CD8-positive, alpha-beta T cell (primary cell): ENCODE measurements at regions of chr17 and their contacts with region 1.

Region 1: GRCh38 chr17:43766413-43767052 is 7.9 kb upstream of the SOST start:
- DNase-seq: peak in 7 of 9 experiments; percentile 22 to 68 (median 51)
- ATAC-seq: no peak
- H3K4me3 ChIP-seq: no peak overlapping the region
- H3K4me3 Mint-ChIP-seq: no peak overlapping the region
- H3K27ac ChIP-seq: no peak overlapping the region
- H3K27ac Mint-ChIP-seq: no peak overlapping the region
- H3K4me1 ChIP-seq: no peaks in the 10 kb centered on the region
- H3K4me1 Mint-ChIP-seq: no peaks in the 10 kb centered on the region
- H3K27me3 ChIP-seq: no peaks in the 10 kb centered on the region
- H3K27me3 Mint-ChIP-seq: no peaks in the 10 kb centered on the region
- CTCF ChIP-seq: peak; percentile 94

Region 2: GRCh38 chr17:43576563-43577229 is 189.8 kb before region 1 on chr17:
- CTCF ChIA-PET with region 1: interaction called, 14 read pairs
- POLR2A ChIA-PET with region 1: no interaction called
- intact Hi-C with region 1: loop called in 1 of 2 experiments (anchors 2 kb)
- DNase-seq: peak; percentile 37 to 83 (median 59)
- ATAC-seq: peak; percentile 71
- H3K4me3 ChIP-seq: no peak overlapping the region
- H3K4me3 Mint-ChIP-seq: no peak overlapping the region
- H3K27ac ChIP-seq: no peak overlapping the region
- H3K27ac Mint-ChIP-seq: no peak overlapping the region
- H3K4me1 ChIP-seq: peaks cover 14% of the 10 kb centered on the region
- H3K4me1 Mint-ChIP-seq: peaks cover 14% of the 10 kb centered on the region
- H3K27me3 ChIP-seq: no peaks in the 10 kb centered on the region
- H3K27me3 Mint-ChIP-seq: peaks cover 2% of the 10 kb centered on the region
- CTCF ChIP-seq: peak; percentile 98

Region 3: GRCh38 chr17:43701318-43701743 is 65.2 kb before region 1 on chr17:
- CTCF ChIA-PET with region 1: interaction called, 23 read pairs
- POLR2A ChIA-PET with region 1: no interaction called
- intact Hi-C with region 1: no loop called
- DNase-seq: peak in 8 of 9 experiments; percentile 13 to 81 (median 52)
- ATAC-seq: peak; percentile 77
- H3K4me3 ChIP-seq: peak overlapping the region in 1 of 2 experiments; percentile 2
- H3K4me3 Mint-ChIP-seq: no peak overlapping the region
- H3K27ac ChIP-seq: no peak overlapping the region
- H3K27ac Mint-ChIP-seq: no peak overlapping the region
- H3K4me1 ChIP-seq: peaks cover 6% of the 10 kb centered on the region
- H3K4me1 Mint-ChIP-seq: peaks cover 13% of the 10 kb centered on the region
- H3K27me3 ChIP-seq: no peaks in the 10 kb centered on the region
- H3K27me3 Mint-ChIP-seq: peaks cover 21% of the 10 kb centered on the region
- CTCF ChIP-seq: no peak

Region 4: GRCh38 chr17:43740541-43740940 is 26.0 kb before region 1 on chr17:
- CTCF ChIA-PET with region 1: interaction called, 17 read pairs
- POLR2A ChIA-PET with region 1: no interaction called
- intact Hi-C with region 1: no loop called
- DNase-seq: no peak
- ATAC-seq: no peak
- H3K4me3 ChIP-seq: no peak overlapping the region
- H3K4me3 Mint-ChIP-seq: no peak overlapping the region
- H3K27ac ChIP-seq: no peak overlapping the region
- H3K27ac Mint-ChIP-seq: no peak overlapping the region
- H3K4me1 ChIP-seq: no peaks in the 10 kb centered on the region
- H3K4me1 Mint-ChIP-seq: no peaks in the 10 kb centered on the region
- H3K27me3 ChIP-seq: no peaks in the 10 kb centered on the region
- H3K27me3 Mint-ChIP-seq: peaks cover 41% of the 10 kb centered on the region
- CTCF ChIP-seq: no peak

Region 5: DNA sequence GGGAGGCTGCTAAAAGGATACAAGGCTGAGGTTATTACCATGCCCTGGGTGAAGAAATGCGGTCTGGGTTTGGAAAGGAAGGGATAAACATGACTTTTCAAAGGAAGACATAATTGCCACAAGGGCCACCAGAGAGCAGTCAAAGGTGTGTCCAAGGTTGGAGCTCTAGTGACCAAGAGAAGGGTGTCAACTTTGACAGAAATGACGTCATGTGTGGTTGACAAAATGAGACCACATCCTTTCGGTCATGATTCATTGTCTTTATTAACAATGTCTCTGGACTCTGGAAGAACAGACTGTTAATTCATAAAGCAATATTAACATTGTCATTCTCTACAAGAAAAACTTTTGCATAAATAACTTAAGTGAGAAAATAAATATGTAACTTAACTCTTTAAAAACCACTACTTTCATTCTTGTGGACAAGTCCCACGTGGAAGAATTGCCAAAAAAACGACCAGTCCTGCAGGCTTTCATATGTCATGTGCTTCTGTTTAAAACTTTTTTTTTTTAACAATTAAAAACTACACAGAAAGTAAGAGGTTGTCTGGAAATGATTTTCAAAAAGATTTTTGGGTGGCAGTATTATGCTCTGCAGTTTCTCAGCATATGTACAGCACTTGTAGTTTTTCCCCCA is 12.9 kb before region 1 on chr17:
- CTCF ChIA-PET with region 1: interaction called, 12 read pairs
- POLR2A ChIA-PET with region 1: no interaction called
- intact Hi-C with region 1: no loop called
- DNase-seq: peak in 2 of 9 experiments; percentile 49 to 63
- ATAC-seq: no peak
- H3K4me3 ChIP-seq: no peak overlapping the region
- H3K4me3 Mint-ChIP-seq: no peak overlapping the region
- H3K27ac ChIP-seq: no peak overlapping the region
- H3K27ac Mint-ChIP-seq: no peak overlapping the region
- H3K4me1 ChIP-seq: no peaks in the 10 kb centered on the region
- H3K4me1 Mint-ChIP-seq: no peaks in the 10 kb centered on the region
- H3K27me3 ChIP-seq: peaks cover 0 to 7% of the 10 kb centered on the region in 2 experiments
- H3K27me3 Mint-ChIP-seq: peaks cover 46% of the 10 kb centered on the region
- CTCF ChIP-seq: no peak

Region 6: DNA sequence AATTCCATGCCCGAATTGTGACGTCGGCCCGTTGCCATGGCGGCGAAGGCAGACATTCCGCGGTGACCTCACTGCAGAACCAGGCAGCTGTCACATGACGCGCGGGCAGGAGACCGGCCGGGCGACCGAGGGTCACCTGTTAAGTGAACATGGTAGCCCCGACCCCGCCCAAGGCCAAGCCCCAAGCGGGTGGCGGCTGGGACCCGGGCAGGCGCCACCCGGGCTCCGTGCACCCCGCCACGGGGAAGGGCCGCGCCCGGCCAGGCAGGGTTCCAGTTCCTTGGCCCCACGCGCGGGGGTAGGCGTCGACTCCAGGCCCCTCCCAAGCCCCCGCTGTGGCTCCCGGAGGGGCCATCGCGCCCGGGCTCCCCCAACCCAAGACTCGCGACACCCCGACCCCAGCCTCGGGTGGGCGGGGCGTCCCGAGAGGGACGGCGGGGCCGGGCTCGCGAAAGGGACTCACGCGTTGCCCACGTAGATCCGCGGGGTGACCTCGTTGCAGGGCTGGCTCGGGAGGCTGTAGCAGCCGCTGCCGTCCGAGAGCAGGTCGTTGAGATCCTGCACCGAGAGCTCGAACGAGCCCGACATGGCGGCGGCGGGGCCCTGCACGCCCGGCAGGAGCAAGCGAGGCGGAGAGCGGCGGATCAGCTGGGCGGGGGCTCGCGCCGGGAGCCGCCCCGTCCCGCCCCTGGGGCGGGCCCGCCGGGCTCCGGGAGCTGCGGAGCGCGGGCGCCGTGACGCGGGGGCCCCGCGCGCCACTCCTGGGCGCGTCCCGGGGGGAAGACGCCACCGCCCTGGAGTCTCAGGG is 12.0 kb after region 1 on chr17 and contains the start of gene DUSP3:
- CTCF ChIA-PET with region 1: interaction called, 13 read pairs
- POLR2A ChIA-PET with region 1: no interaction called
- intact Hi-C with region 1: no loop called
- DNase-seq: peak; percentile 51 to 88 (median 71)
- ATAC-seq: peak; percentile 98
- H3K4me3 ChIP-seq: peak within 1 kb of the TSS; percentile 75 to 88
- H3K4me3 Mint-ChIP-seq: peak within 1 kb of the TSS; percentile 84
- H3K27ac ChIP-seq: peak within 1 kb of the TSS; percentile 46 to 68
- H3K27ac Mint-ChIP-seq: peak within 1 kb of the TSS; percentile 52
- H3K4me1 ChIP-seq: peaks cover 11% of the 10 kb centered on the region
- H3K4me1 Mint-ChIP-seq: peaks cover 10% of the 10 kb centered on the region
- H3K27me3 ChIP-seq: no peaks in the 10 kb centered on the region
- H3K27me3 Mint-ChIP-seq: peaks cover 32% of the 10 kb centered on the region
- CTCF ChIP-seq: no peak
- total RNA-seq, gene DUSP3: 8.7 to 9.1 TPM

Region 7: GRCh38 chr17:43787728-43788127 is 21.2 kb after region 1 on chr17:
- CTCF ChIA-PET with region 1: interaction called, 12 read pairs
- POLR2A ChIA-PET with region 1: no interaction called
- intact Hi-C with region 1: no loop called
- DNase-seq: no peak
- ATAC-seq: no peak
- H3K4me3 ChIP-seq: no peak overlapping the region
- H3K4me3 Mint-ChIP-seq: no peak overlapping the region
- H3K27ac ChIP-seq: no peak overlapping the region
- H3K27ac Mint-ChIP-seq: no peak overlapping the region
- H3K4me1 ChIP-seq: no peaks in the 10 kb centered on the region
- H3K4me1 Mint-ChIP-seq: peaks cover 8% of the 10 kb centered on the region
- H3K27me3 ChIP-seq: peaks cover 0 to 3% of the 10 kb centered on the region in 2 experiments
- H3K27me3 Mint-ChIP-seq: peaks cover 23% of the 10 kb centered on the region
- CTCF ChIP-seq: no peak

Region 8: GRCh38 chr17:43940630-43941029 is 174.1 kb after region 1 on chr17:
- CTCF ChIA-PET with region 1: no interaction called
- POLR2A ChIA-PET with region 1: no interaction called
- intact Hi-C with region 1: no loop called
- DNase-seq: peak in 2 of 9 experiments; percentile 24 to 32
- ATAC-seq: no peak
- H3K4me3 ChIP-seq: no peak overlapping the region
- H3K4me3 Mint-ChIP-seq: no peak overlapping the region
- H3K27ac ChIP-seq: no peak overlapping the region
- H3K27ac Mint-ChIP-seq: no peak overlapping the region
- H3K4me1 ChIP-seq: peaks cover 12% of the 10 kb centered on the region
- H3K4me1 Mint-ChIP-seq: peaks cover 14% of the 10 kb centered on the region
- H3K27me3 ChIP-seq: no peaks in the 10 kb centered on the region
- H3K27me3 Mint-ChIP-seq: peaks cover 4% of the 10 kb centered on the region
- CTCF ChIP-seq: no peak